A673 (cell line): ENCODE measurements at regions of chr1 and their contacts with region 1.

Region 1: GRCh38 chr1:156500797-156501499 is 373 bp upstream of the MEF2D start:
- DNase-seq: peak; percentile 97
- H3K4me3 ChIP-seq: peak overlapping the region; percentile 98
- H3K27ac ChIP-seq: peak overlapping the region; percentile 98
- H3K4me1 ChIP-seq: peaks cover 69% of the 10 kb centered on the region
- H3K27me3 ChIP-seq: no peaks in the 10 kb centered on the region
- CTCF ChIP-seq: peak; percentile 59

Region 2: DNA sequence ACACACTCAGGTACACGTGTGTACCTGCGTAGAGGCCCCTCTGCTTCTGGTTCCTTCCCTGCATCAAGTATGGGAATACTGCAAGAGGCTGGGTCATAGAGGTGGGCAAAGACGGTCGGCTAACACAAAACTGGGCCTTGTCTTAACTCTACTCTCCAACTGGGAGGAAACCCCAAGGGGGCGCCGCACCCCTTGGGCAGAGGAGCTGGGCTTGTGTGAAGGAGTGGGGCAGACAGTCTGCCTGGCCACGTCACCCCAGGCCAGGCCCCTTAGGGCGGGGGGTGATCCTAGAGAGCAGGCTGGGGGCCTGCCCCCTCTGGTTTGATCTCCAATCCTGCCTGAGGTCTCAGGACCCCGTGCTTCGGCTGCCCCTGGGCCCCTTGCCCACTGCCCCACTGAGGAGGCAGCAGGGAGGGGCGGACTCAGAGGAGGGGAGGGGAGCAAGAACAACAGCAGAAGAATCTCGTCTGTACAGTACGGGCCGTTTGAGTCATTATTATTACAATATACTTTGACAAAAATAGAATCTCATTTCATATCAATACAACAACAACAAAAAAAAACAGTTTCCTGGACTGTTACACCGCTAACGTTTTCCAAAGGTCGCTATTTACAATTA is 35.1 kb before region 1 on chr1:
- CTCF ChIA-PET with region 1: no interaction called
- POLR2A ChIA-PET with region 1: no interaction called
- intact Hi-C with region 1: no loop called
- DNase-seq: no peak
- H3K4me3 ChIP-seq: no peak overlapping the region
- H3K27ac ChIP-seq: no peak overlapping the region
- H3K4me1 ChIP-seq: no peaks in the 10 kb centered on the region
- H3K27me3 ChIP-seq: no peaks in the 10 kb centered on the region
- CTCF ChIP-seq: peak; percentile 33

Region 3: DNA sequence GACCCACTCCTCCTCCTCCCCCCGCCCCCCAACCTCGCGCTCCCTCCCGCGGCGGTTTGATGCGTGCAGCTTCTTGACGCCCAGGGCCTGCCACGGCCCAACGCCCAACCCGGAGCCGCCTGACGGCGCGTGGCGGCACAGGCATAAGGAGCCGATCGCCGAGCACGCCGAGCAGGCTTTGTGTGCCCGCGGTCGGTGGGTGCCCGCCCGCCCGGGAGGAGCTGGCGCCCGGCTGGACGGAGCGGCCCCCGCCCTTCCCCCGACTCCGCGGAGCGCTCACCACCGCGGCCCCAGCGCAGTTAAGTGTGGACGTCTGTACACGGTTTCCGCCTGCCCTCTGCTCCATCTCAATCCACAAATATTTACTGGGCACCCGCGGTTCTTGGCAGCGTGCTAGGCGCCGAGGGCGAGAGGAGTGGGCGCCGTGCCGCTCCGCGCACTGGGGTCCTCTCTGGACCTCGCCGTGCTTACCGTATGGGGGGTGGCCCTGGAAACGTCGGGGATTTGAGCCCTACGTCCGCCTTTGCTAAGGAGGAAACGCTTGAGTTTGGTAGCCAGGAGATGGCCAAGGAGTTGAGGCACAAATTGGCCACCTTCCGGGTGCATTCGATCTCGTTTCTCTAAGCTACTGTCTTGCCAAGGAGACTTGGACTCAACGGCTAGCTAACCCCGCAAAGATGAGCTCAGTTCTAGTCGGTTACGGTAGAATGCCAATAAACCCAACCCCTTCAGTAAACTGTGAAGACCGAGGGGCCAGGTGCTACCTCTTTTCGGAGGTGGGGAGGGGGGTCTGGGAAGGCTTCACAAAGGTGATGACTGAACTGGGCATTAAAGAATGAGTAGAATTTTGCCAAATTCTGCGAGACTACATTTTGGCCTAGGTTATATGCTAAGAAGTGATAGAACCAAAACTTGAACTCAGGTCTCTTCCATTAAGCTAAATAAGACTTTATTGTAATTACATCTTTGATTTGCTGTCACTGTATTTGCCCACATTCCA is 251.1 kb after region 1 on chr1:
- CTCF ChIA-PET with region 1: no interaction called
- POLR2A ChIA-PET with region 1: interaction called, 18 read pairs
- intact Hi-C with region 1: no loop called
- DNase-seq: peak; percentile 99
- H3K4me3 ChIP-seq: peak overlapping the region; percentile 92
- H3K27ac ChIP-seq: peak overlapping the region; percentile 98
- H3K4me1 ChIP-seq: peaks cover 28% of the 10 kb centered on the region
- H3K27me3 ChIP-seq: no peaks in the 10 kb centered on the region
- CTCF ChIP-seq: no peak